Activated T-helper 1 cell treated with anti-CD3 and anti-CD28 coated beads, Interleukin-12 subunit alpha, Interleukin-12 subunit beta, Interleukin-2, Interleukin-4 antibody, amounts not matched to agents 30 ng/mL and 10 ng/mL and 1 ng/mL, durations not matched to agents 14 hours and 24 hours and 36 hours (primary cell): ENCODE measurements at regions of chr20 and their contacts with region 1.

Region 1: GRCh38 chr20:35954200-35954906 is at the start of gene SCAND1:
- DNase-seq: peak; percentile 96
- H3K4me3 Mint-ChIP-seq: peak within 1 kb of the TSS; percentile 100
- H3K27ac Mint-ChIP-seq: peak within 1 kb of the TSS; percentile 100
- H3K4me1 Mint-ChIP-seq: peaks cover 21% of the 10 kb centered on the region
- H3K27me3 Mint-ChIP-seq: peaks cover 8% of the 10 kb centered on the region
- total RNA-seq, gene SCAND1: 39.7 and 41.2 TPM in 2 replicates

Region 2: DNA sequence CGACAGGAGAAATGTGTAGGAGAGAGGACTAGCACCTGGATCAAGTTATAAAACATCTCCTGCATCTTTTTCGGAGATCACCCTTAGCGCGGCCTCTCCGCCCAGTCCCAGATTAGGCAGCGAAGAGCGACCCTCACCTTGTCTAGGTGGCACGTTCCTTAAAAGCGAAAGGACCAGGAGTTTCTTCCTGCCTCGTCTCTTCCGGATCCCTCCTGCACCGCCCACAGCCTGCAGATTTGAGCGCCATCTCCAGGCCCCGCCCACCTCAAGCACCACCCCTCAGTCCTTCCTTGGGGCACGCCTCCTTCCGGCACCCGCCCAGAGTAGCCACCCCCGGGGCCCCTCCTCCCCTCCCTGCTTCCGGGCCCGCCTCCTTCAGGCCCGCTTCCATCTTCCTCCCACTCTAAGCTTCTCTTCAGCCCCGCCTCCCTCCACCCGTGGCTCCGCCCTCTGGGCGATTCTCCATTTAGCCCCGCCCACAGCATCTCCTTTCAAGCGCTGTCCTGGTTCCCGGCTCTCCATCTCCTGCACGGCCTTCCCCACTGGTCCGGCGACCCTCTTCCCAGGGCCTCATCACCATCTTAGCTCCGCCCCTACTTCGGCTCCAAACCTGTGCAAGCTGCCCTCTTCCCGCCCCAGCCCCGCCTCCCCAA is 1961.3 kb before region 1 on chr20:
- intact Hi-C with region 1: loop called (anchors 2 kb)
- DNase-seq: peak; percentile 99
- H3K4me3 Mint-ChIP-seq: peak overlapping the region; percentile 88
- H3K27ac Mint-ChIP-seq: peak overlapping the region; percentile 97
- H3K4me1 Mint-ChIP-seq: peaks cover 58% of the 10 kb centered on the region
- H3K27me3 Mint-ChIP-seq: peaks cover 2% of the 10 kb centered on the region

Region 3: DNA sequence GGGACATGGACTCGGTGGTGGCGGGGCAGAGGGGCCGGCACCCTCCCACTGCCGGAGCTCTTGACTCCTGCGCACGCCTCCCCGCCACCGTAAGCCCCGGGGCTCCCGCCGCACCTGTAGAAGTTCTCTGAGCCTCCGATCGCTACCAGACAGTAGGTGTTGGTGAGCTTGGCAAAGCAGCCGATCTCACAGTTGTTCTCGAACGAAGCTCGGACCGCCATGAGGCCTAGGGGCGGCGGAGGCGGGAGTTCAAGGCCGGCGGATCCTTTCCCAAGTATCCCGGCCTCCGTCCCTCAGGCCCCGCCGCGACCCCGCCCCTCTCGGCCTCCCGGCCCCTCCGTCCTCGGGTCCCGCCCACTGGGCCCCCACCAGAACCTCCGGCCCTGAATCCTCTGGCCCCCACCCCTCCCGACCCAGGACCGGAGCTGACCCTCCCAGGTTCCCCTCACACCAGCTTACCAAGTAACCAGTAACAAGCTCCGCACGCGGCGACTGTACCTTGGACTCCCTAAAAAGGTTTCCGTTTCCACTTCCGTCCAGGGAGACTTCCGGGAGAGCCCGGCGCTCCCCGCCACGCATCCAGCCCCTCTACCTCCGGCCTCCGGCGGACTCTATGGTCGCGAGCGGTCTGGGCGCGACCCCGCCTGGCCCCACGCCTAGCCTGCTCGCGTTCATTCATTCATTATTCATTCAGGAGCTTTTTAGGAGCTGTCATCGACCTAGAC is 669.9 kb before region 1 on chr20 and contains the start of gene EIF6:
- intact Hi-C with region 1: loop called (anchors 5 kb)
- DNase-seq: peak; percentile 73
- H3K4me3 Mint-ChIP-seq: peak within 1 kb of the TSS; percentile 93
- H3K27ac Mint-ChIP-seq: peak within 1 kb of the TSS; percentile 95
- H3K4me1 Mint-ChIP-seq: peaks cover 28% of the 10 kb centered on the region
- H3K27me3 Mint-ChIP-seq: peaks cover 2% of the 10 kb centered on the region
- total RNA-seq, gene EIF6: 232 TPM in 2 replicates

Region 4: GRCh38 chr20:35619196-35620095 is 334.9 kb before region 1 on chr20:
- intact Hi-C with region 1: loop called (anchors 1 kb)
- DNase-seq: peak; percentile 75
- H3K4me3 Mint-ChIP-seq: peak overlapping the region; percentile 88
- H3K27ac Mint-ChIP-seq: peak overlapping the region; percentile 89
- H3K4me1 Mint-ChIP-seq: peaks cover 27% of the 10 kb centered on the region
- H3K27me3 Mint-ChIP-seq: no peaks in the 10 kb centered on the region

Region 5: GRCh38 chr20:35741892-35742740 is 212.2 kb before region 1 on chr20 and contains the start of gene RBM39:
- intact Hi-C with region 1: loop called (anchors 1 kb)
- DNase-seq: peak; percentile 100
- H3K4me3 Mint-ChIP-seq: peak within 1 kb of the TSS; percentile 98
- H3K27ac Mint-ChIP-seq: peak within 1 kb of the TSS; percentile 99
- H3K4me1 Mint-ChIP-seq: peaks cover 40% of the 10 kb centered on the region
- H3K27me3 Mint-ChIP-seq: no peaks in the 10 kb centered on the region
- total RNA-seq, gene RBM39: 349 and 357 TPM in 2 replicates

Region 6: GRCh38 chr20:36132802-36133211 is 178.5 kb after region 1 on chr20:
- intact Hi-C with region 1: loop called (anchors 1 kb)
- DNase-seq: no peak
- H3K4me3 Mint-ChIP-seq: no peak overlapping the region
- H3K27ac Mint-ChIP-seq: no peak overlapping the region
- H3K4me1 Mint-ChIP-seq: no peaks in the 10 kb centered on the region
- H3K27me3 Mint-ChIP-seq: peaks cover 2% of the 10 kb centered on the region

Region 7: DNA sequence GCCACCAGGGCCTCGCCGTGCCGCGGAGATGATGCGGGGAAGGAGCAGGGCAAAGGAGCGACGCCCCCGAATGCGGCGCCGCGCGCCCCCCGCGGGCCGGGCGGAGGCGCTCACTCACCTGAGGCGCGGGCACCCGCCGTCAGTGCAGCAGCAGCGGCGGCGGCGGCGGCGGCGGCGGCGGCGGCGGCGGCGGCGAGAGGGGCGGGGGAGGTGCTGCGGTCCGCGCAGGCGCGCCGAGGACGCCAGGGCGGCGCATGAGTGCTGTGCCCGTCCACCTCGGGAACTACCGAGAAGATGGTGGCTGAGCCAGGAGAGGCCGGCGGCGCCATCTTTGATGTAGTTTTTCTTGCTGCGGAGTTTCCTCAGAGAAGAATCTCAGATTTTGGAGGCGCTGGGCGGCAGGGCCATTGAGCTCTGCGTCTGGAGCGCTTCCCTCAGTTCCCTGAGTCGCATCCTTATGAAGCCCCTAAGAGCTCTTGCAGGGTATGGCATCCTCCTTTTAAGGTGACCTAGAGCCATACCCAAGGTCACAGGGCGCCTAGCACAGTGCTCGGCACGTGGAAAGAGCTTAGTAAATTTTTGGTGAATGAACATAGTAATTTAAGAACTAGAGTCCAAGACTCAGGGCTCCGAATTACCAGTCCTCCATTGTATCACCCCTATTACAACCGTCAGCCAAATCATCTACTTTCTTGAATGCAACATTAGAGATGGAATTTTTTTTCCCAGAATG is 791.7 kb after region 1 on chr20 and contains the start of gene NDRG3:
- intact Hi-C with region 1: loop called (anchors 1 kb)
- DNase-seq: peak; percentile 90
- H3K4me3 Mint-ChIP-seq: peak within 1 kb of the TSS; percentile 91
- H3K27ac Mint-ChIP-seq: peak within 1 kb of the TSS; percentile 83
- H3K4me1 Mint-ChIP-seq: peaks cover 27% of the 10 kb centered on the region
- H3K27me3 Mint-ChIP-seq: peaks cover 6% of the 10 kb centered on the region
- total RNA-seq, gene NDRG3: 21.3 and 21.9 TPM in 2 replicates